ENCODE measurements at regions of chr12 and their contacts with region 1.

Region 1: GRCh38 chr12:52860063-52860823 is 11.4 kb upstream of the KRT78 start:
- DNase-seq: peak; percentile 88
- H3K4me3 ChIP-seq: peak overlapping the region in 1 of 3 experiments; percentile 12
- H3K27ac ChIP-seq: peak overlapping the region; percentile 89
- H3K4me1 ChIP-seq: peaks cover 25% of the 10 kb centered on the region
- H3K27me3 ChIP-seq: no peaks in the 10 kb centered on the region
- CTCF ChIP-seq: no peak

Region 2: GRCh38 chr12:52590021-52590420 is 270.2 kb before region 1 on chr12:
- CTCF ChIA-PET with region 1: no interaction called
- dilution Hi-C with region 1: loop called (anchors 5 kb)
- in situ Hi-C with region 1: no loop called
- intact Hi-C with region 1: no loop called
- DNase-seq: no peak
- H3K4me3 ChIP-seq: no peak overlapping the region
- H3K27ac ChIP-seq: no peak overlapping the region
- H3K4me1 ChIP-seq: no peaks in the 10 kb centered on the region
- H3K27me3 ChIP-seq: no peaks in the 10 kb centered on the region
- CTCF ChIP-seq: no peak

Region 3: DNA sequence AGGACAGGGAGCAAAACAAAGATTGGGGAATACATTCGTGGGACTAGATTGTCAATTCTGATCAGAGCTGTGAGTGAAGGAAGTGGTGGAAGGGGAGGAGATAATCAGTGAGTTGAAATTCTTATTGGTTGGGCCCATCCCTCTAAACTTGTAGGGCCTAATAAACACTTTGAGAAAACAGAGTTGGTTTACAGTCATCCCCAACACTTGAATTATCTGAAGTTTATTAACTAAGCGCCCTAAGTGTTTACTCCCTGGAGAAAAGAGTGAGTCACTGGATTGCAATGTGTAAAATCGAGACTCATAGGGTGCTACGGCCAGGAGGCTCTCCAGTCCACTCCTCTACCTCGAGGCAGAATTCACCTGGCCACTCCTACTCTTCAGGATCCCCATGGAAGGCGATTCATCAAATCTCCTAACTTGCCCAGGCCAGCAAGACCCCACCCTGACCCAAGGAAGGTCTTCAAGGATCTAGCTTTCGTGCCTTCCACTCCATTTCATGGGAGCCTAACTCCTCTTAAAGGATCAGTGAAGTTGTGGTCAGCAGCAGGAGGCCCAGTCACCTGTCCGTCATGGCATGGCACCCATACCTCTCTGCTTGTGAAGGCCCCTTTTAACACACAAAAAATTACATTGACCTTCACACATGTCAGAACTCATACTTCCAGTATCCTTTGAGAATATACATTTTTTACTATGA is 61.0 kb before region 1 on chr12:
- CTCF ChIA-PET with region 1: no interaction called
- dilution Hi-C with region 1: no loop called
- in situ Hi-C with region 1: no loop called
- intact Hi-C with region 1: loop called (anchors 5 kb)
- DNase-seq: peak; percentile 74
- H3K4me3 ChIP-seq: no peak overlapping the region
- H3K27ac ChIP-seq: no peak overlapping the region
- H3K4me1 ChIP-seq: peaks cover 34% of the 10 kb centered on the region
- H3K27me3 ChIP-seq: no peaks in the 10 kb centered on the region
- CTCF ChIP-seq: no peak

Region 4: GRCh38 chr12:52821826-52822660 is 38.2 kb before region 1 on chr12:
- CTCF ChIA-PET with region 1: no interaction called
- dilution Hi-C with region 1: loop called (anchors 5 kb)
- in situ Hi-C with region 1: no loop called
- intact Hi-C with region 1: no loop called
- DNase-seq: no peak
- H3K4me3 ChIP-seq: no peak overlapping the region
- H3K27ac ChIP-seq: no peak overlapping the region
- H3K4me1 ChIP-seq: no peaks in the 10 kb centered on the region
- H3K27me3 ChIP-seq: peaks cover 10% of the 10 kb centered on the region
- CTCF ChIP-seq: no peak